ENCODE measurements at regions of chrX and their contacts with region 1.

Region 1: GRCh38 chrX:48897621-48898306 is at the starts of genes PQBP1 and TIMM17B:
- DNase-seq: peak; percentile 95 to 97 (median 96)
- H3K4me3 ChIP-seq: peak within 1 kb of the TSS; percentile 59 to 83 (median 77)
- H3K27ac ChIP-seq: peak within 1 kb of the TSS; percentile 88 to 94
- H3K4me1 ChIP-seq: peaks cover 0 to 16% (median 12%) of the 10 kb centered on the region in 4 experiments
- H3K27me3 ChIP-seq: no peaks in the 10 kb centered on the region

Region 2: GRCh38 chrX:48911412-48912182 is 13.8 kb after region 1 on chrX and contains the start of gene SLC35A2:
- CTCF ChIA-PET with region 1: interaction called, 5 read pairs
- POLR2A ChIA-PET with region 1: interaction called, 12 read pairs
- DNase-seq: peak; percentile 78 to 91 (median 88)
- H3K4me3 ChIP-seq: peak within 1 kb of the TSS; percentile 58 to 93 (median 76)
- H3K27ac ChIP-seq: peak within 1 kb of the TSS; percentile 83 to 91
- H3K4me1 ChIP-seq: peaks cover 7 to 37% (median 17%) of the 10 kb centered on the region in 4 experiments
- H3K27me3 ChIP-seq: peaks cover 0 to 3% (median 0%) of the 10 kb centered on the region in 5 experiments

Region 3: GRCh38 chrX:49043220-49043986 is 145.6 kb after region 1 on chrX and contains the start of gene TFE3:
- CTCF ChIA-PET with region 1: no interaction called
- POLR2A ChIA-PET with region 1: no interaction called
- DNase-seq: peak; percentile 98 to 99 (median 99)
- H3K4me3 ChIP-seq: peak within 1 kb of the TSS; percentile 68 to 84 (median 76)
- H3K27ac ChIP-seq: peak within 1 kb of the TSS; percentile 65 to 90
- H3K4me1 ChIP-seq: peaks cover 6 to 43% (median 36%) of the 10 kb centered on the region in 4 experiments
- H3K27me3 ChIP-seq: no peaks in the 10 kb centered on the region

Measured in common myeloid progenitor, CD34-positive (primary cell).